WTC11 (cell line): ENCODE measurements at regions of chr7 and their contacts with region 1.

Region 1: GRCh38 chr7:47266131-47266706 is 315.7 kb downstream of the TNS3 start:
- DNase-seq: peak; percentile 64
- ATAC-seq: peak; percentile 97
- H3K4me3 Mint-ChIP-seq: no peak overlapping the region
- H3K27ac Mint-ChIP-seq: no peak overlapping the region
- H3K4me1 Mint-ChIP-seq: peaks cover 3% of the 10 kb centered on the region
- H3K27me3 Mint-ChIP-seq: no peaks in the 10 kb centered on the region
- CTCF ChIP-seq: peak; percentile 89

Region 2: GRCh38 chr7:47283507-47284131 is 17.4 kb after region 1 on chr7:
- CTCF ChIA-PET with region 1: interaction called, 36 read pairs
- POLR2A ChIA-PET with region 1: no interaction called
- DNase-seq: no peak
- ATAC-seq: no peak
- H3K4me3 Mint-ChIP-seq: no peak overlapping the region
- H3K27ac Mint-ChIP-seq: no peak overlapping the region; the same call in 1 of the 2 replicates
- H3K4me1 Mint-ChIP-seq: no peaks in the 10 kb centered on the region
- H3K27me3 Mint-ChIP-seq: no peaks in the 10 kb centered on the region
- CTCF ChIP-seq: no peak

Region 3: DNA sequence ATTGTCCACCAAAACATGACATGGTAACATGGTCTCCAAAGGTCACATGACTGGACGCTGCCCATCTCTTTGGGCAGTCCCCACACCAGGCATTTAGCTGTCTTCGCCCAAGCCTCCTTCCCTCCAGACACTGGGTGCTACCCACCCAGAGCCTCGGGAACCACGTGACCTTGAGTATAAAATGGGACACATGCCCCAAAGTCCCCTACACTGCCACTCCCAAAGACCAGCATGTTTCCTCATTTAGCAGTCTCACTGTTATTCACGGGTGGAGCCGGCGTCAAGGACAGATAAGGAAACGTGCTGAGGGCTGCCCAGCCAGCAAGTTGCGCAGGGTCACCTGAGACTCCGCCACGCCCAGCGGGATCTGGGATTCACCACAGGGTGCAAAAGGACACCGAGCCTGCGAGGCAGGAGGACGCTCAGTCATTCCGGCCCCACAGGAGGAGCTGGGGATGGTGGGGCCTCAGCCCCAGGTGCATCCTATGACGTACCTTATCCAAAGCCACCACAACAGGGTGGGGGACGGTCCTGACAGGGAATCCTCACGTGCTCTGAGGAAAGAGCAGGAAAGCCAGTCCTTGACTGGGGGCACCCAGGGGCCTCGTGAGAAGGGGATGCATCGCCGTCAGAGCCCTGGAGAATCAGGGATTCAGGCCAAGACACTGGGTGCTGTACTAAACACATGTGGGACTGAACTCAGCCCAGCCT is 88.8 kb after region 1 on chr7:
- CTCF ChIA-PET with region 1: interaction called, 16 read pairs
- POLR2A ChIA-PET with region 1: no interaction called
- DNase-seq: peak; percentile 8
- ATAC-seq: no peak
- H3K4me3 Mint-ChIP-seq: no peak overlapping the region
- H3K27ac Mint-ChIP-seq: no peak overlapping the region
- H3K4me1 Mint-ChIP-seq: peaks cover 7% of the 10 kb centered on the region
- H3K27me3 Mint-ChIP-seq: no peaks in the 10 kb centered on the region
- CTCF ChIP-seq: no peak

Region 4: DNA sequence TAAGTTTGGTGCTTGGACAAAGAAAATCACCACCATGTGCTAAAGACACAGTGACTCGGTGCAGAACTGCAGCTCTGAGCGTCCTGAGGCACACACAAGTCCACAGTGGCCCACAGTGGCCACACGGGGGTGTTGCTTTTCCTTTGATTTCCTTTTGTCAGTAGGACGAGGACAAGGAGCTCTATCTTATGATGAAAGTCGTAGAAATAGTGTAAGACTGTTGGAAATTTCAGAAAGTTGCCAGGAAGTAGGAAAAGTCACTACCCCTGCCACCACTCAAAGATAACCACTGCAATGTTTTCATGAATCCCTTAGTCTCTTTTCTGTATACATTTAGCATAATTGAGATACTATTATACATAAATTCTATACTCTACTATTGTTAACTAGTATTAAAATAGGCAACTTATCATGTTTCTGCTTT is 169.7 kb after region 1 on chr7:
- CTCF ChIA-PET with region 1: interaction called, 52 read pairs
- POLR2A ChIA-PET with region 1: no interaction called
- DNase-seq: peak; percentile 58
- ATAC-seq: peak; percentile 91
- H3K4me3 Mint-ChIP-seq: no peak overlapping the region
- H3K27ac Mint-ChIP-seq: peak overlapping the region; percentile 45; the same call in 1 of the 2 replicates
- H3K4me1 Mint-ChIP-seq: no peaks in the 10 kb centered on the region
- H3K27me3 Mint-ChIP-seq: no peaks in the 10 kb centered on the region
- CTCF ChIP-seq: 0 out of 2 replicates have a peak, but pooled peaks have one; percentile 25

Region 5: GRCh38 chr7:47581806-47582763 is 315.9 kb after region 1 on chr7 and contains the start of gene TNS3:
- CTCF ChIA-PET with region 1: interaction called, 10 read pairs
- POLR2A ChIA-PET with region 1: no interaction called
- DNase-seq: peak; percentile 68
- ATAC-seq: peak; percentile 68
- H3K4me3 Mint-ChIP-seq: peak within 1 kb of the TSS; percentile 85
- H3K27ac Mint-ChIP-seq: peak within 1 kb of the TSS; percentile 29; the same call in 1 of the 2 replicates
- H3K4me1 Mint-ChIP-seq: peaks cover 54% of the 10 kb centered on the region
- H3K27me3 Mint-ChIP-seq: peaks cover 40% of the 10 kb centered on the region
- CTCF ChIP-seq: no peak; the same call in 1 of the 2 replicates
- total RNA-seq, gene TNS3: 28.3 to 37.7 TPM (median 29.6 TPM) in 3 replicates

Region 6: DNA sequence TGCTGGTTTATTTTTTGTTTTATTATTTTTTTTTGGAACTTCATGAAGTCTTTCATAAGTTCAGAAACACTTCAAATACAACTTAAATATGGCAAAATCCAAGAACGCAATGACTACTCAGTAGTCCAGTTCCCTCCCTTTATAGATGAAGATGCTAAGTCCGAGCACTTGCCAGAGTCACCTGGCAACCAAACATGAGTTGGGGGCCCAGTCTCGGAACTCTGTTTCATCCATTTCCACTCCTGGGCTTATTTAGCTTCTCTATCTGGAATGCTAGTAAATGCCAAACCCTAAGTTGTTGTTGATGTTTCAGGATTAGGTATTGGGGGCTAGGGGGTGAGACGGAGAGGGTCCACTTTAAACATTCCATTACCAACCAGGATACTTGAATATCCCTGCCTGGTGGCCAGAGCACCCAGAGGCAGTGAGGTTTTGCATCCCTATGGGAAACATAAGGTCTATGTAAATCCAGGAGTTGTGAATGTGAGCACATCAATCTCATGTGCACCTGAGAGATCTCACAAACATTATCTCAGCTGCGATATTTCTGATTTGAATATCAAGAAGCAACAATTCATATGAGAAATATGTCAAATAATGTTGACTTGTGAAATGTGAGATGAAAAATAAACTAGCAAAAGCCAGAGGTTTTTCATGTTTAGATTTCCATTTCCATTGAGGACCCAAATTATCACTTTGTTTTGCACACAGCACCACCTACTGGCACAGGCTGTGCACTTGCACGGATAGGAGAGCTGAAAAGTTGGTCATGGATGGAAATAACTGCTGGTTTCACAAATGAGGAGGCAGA is 552.8 kb after region 1 on chr7:
- CTCF ChIA-PET with region 1: interaction called, 25 read pairs
- POLR2A ChIA-PET with region 1: no interaction called
- DNase-seq: peak; percentile 64
- ATAC-seq: peak; percentile 63
- H3K4me3 Mint-ChIP-seq: no peak overlapping the region
- H3K27ac Mint-ChIP-seq: no peak overlapping the region
- H3K4me1 Mint-ChIP-seq: peaks cover 16% of the 10 kb centered on the region
- H3K27me3 Mint-ChIP-seq: no peaks in the 10 kb centered on the region
- CTCF ChIP-seq: peak; percentile 69